ENCODE measurements at regions of chr2 and their contacts with region 1.

Region 1: DNA sequence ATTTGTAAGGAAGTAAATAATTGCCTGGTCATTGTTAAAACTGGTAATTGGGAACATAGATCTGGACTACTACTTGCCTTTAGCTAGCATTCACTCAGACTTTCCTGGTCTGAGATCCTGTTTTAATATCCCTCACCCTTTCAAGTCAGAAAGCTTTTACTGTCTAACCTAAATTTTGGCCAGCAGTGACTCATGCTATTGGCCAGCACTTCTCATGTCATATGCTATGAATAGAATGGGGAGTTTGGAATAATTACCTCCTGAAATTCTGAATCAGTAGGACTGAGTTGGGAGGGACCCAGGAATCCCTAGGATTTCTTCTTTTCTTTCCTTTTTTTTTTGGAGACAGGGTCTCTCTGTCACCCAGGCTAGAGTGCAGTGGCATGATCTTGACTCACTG is 19.3 kb downstream of the STK36 start:
- DNase-seq: no peak
- H3K4me3 ChIP-seq: no peak overlapping the region
- H3K27ac ChIP-seq: no peak overlapping the region
- H3K4me1 ChIP-seq: no peaks in the 10 kb centered on the region
- H3K27me3 ChIP-seq: no peaks in the 10 kb centered on the region
- CTCF ChIP-seq: no peak
- POLR2A ChIP-seq: no peak

Region 2: DNA sequence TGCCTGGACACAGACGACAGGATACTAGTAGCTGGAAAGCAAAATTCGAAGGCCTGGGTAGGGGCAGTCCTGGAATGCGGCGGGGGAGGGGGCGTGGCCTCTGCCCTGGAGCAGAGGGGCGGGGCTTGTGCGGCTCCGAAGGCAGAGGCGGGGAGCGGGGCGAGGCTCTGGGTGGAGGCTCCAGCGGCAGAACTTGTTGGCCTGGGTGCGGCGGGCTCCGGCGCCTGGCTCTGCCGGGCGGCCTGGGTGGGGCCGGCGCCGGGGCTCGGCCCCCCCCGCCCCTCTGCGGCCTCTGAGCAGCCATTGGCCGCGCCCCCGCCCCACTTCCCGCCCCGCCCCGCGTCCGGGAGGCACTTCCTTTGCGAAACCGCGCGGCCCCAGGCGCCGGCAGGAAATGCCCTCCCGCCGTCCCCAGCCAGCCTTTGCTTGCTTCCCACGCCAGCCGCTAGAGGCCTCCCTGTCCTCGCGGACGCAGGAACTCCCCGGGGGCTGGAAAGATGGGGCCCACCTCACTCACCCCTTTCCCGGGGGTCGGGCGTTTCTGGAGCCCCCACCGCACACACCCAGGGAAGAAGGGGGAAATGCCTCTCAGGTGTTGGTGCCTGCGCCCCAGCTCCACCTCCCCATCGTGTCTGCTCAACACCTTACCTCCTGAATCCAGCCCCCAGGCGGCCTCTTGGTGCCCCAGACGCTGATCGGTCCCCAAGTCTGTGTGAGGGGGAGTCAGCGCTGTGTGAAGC is 284.9 kb before region 1 on chr2:
- CTCF ChIA-PET with region 1: no interaction called
- POLR2A ChIA-PET with region 1: no interaction called
- dilution Hi-C with region 1: no loop called
- intact Hi-C with region 1: loop called (anchors 1 kb)
- DNase-seq: peak; percentile 94
- H3K4me3 ChIP-seq: peak overlapping the region; percentile 16 to 25 (median 18)
- H3K27ac ChIP-seq: peak overlapping the region; percentile 81
- H3K4me1 ChIP-seq: peaks cover 22% of the 10 kb centered on the region
- H3K27me3 ChIP-seq: no peaks in the 10 kb centered on the region
- CTCF ChIP-seq: peak; percentile 66 to 91
- POLR2A ChIP-seq: peak; percentile 80

Region 3: DNA sequence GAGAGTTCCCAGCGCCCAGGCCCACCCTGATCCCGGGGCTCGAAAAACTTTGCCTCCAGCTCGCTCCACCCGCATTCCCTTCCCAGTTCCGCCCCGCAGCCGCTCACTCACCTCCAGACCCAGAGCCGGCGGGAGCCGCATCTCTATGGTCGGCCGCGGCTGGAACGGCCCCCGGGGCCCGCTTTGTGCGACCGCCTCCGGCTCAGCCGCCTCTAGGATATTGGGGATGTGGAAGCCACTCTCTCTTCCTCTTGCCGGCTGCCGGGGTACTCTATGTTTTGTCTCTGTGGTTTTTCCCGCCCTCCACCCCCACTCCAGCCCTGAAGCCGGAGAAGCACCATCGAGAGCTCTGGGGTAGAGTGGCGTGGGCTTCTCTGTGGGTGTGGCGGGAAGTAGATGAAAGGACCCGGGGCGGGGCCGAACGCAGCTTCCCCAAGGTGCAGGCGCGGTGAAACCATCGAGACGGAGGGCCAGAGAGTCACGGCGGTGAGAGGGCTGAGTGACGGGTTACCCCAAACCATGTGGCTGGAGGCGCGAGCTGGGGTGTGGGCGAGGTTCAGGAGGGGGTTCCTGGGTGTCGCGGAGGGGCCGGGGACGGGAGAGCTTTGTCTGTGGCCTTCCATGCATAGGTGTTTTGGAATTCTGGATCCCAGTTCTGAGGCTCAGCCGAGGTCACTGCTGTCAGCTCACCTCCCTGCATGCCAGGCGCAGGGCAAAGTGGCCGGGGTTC is 31.8 kb before region 1 on chr2 and contains the starts of genes BCS1L and ZNF142:
- CTCF ChIA-PET with region 1: interaction called, 45 read pairs
- POLR2A ChIA-PET with region 1: no interaction called
- dilution Hi-C with region 1: no loop called
- intact Hi-C with region 1: loop called (anchors 1 kb)
- DNase-seq: peak; percentile 88
- H3K4me3 ChIP-seq: peak within 1 kb of the TSS; percentile 74 to 95 (median 87)
- H3K27ac ChIP-seq: peak within 1 kb of the TSS; percentile 24
- H3K4me1 ChIP-seq: peaks cover 9% of the 10 kb centered on the region
- H3K27me3 ChIP-seq: no peaks in the 10 kb centered on the region
- CTCF ChIP-seq: no peak
- POLR2A ChIP-seq: peak; percentile 73
- total RNA-seq, gene BCS1L: 43.0 and 57.4 TPM in 2 replicates
- total RNA-seq, gene ZNF142: 31.4 and 34.5 TPM in 2 replicates

Region 4: DNA sequence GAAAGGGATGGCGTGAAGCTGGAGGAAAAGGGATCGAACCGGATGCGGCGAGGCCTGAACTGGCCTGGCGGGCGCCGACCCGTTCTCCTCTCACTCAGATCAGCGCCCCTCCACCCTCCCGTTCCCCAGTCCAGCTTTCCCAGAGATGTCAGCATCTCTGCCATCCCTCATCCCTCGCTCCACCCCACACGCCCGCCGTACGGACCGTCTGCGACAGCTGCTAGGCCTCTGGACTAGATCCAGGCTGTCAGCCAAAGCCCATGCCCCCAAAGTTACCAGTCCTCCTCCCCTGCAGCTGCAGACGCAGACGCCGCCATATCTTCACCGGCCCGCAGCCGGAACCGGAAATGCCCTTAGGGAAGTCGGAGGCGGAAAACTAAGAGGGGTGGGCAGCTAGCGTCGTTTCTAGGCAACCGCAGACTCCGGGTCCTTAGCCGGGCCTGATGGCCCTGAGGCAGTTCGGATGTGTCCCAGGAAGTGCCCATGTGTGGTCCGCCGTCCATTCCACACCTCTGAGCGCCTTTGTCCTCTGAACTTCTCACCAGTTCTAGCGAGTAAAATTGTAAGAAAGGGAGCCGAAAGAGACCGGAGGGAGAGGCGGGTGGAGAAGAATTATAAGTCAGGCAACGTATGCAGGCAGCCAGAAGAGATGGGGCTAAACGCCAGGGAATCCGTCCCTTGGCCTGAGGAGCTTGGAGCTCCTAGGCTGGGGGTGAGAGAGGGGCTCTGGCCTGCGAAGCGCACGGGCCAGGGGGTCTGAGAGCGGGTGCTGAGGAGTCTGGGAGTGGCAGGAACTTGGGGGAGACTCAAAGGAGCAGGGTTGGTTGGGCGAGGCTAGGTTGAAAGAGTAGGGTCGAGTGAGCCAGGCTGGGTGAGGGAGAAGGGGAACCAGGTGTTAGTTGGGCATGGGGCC is 19.3 kb before region 1 on chr2 and contains the starts of genes RNF25 and STK36:
- CTCF ChIA-PET with region 1: interaction called, 36 read pairs
- POLR2A ChIA-PET with region 1: interaction called, 5 read pairs
- dilution Hi-C with region 1: no loop called
- intact Hi-C with region 1: no loop called
- DNase-seq: peak; percentile 82
- H3K4me3 ChIP-seq: peak within 1 kb of the TSS; percentile 54 to 87 (median 82)
- H3K27ac ChIP-seq: peak within 1 kb of the TSS; percentile 79
- H3K4me1 ChIP-seq: peaks cover 16% of the 10 kb centered on the region
- H3K27me3 ChIP-seq: no peaks in the 10 kb centered on the region
- CTCF ChIP-seq: no peak
- POLR2A ChIP-seq: peak; percentile 86
- total RNA-seq, gene RNF25: 38.2 and 39.1 TPM in 2 replicates
- total RNA-seq, gene STK36: 34.9 and 40.9 TPM in 2 replicates

Region 5: GRCh38 chr2:218701806-218702205 is 10.6 kb after region 1 on chr2:
- CTCF ChIA-PET with region 1: interaction called, 20 read pairs
- POLR2A ChIA-PET with region 1: no interaction called
- dilution Hi-C with region 1: no loop called
- intact Hi-C with region 1: no loop called
- DNase-seq: no peak
- H3K4me3 ChIP-seq: no peak overlapping the region
- H3K27ac ChIP-seq: no peak overlapping the region
- H3K4me1 ChIP-seq: no peaks in the 10 kb centered on the region
- H3K27me3 ChIP-seq: no peaks in the 10 kb centered on the region
- CTCF ChIP-seq: no peak
- POLR2A ChIP-seq: no peak

Region 6: GRCh38 chr2:218727502-218728165 is 36.4 kb after region 1 on chr2:
- CTCF ChIA-PET with region 1: interaction called, 13 read pairs
- POLR2A ChIA-PET with region 1: no interaction called
- dilution Hi-C with region 1: no loop called
- intact Hi-C with region 1: no loop called
- DNase-seq: peak; percentile 18
- H3K4me3 ChIP-seq: no peak overlapping the region
- H3K27ac ChIP-seq: no peak overlapping the region
- H3K4me1 ChIP-seq: peaks cover 15% of the 10 kb centered on the region
- H3K27me3 ChIP-seq: no peaks in the 10 kb centered on the region
- CTCF ChIP-seq: peak; percentile 13 to 24
- POLR2A ChIP-seq: no peak

Measured in endothelial cell of umbilical vein (primary cell).